PC-3 (cell line): ENCODE measurements at regions of chrX and their contacts with region 1.

Region 1: DNA sequence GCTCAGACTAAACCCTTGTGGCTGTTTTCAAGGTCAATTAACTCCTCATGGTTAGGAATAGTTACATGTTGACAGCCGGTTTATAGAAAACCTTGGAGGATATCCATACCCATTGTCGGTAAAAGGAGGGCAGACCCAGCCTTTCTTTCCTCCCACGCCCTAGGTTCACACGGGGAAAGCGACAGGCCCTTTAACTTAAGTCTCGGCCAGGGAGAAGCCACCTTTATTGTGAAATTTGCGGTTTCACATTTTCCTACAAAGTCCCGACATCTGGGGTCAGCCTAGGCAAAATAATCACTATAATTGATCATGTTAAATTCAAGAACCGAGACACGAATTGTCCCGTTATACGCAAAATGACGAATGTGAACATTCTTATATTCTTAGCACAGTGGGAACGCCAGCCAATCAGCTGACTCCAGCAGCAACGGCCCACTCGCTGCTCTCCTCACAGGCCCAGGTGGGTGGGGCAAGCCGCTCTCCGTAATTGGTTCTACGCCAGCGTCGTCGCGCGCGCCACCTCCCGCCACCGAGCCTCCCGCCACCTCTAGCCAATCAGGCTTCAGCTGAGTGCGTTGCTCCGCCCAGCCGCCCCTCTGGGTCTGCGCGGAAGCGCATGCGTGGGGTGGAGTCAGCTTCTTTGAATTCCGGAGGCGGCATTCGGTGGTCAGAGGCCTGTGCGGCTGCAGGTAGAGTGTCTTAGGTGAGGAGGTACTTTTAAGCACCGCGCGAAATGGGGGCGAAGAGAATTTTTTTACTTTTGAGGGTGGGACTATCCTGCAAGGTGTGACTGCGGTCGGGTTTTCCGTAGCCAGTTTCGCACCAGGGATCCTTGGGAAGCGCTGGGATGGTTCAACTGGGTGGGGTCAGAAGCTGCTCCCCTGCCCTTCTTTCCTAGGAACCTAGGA is at the start of gene CENPI:
- DNase-seq: peak; percentile 96
- ATAC-seq: peak; percentile 97
- H3K4me3 ChIP-seq: peak within 1 kb of the TSS; percentile 90
- H3K27ac ChIP-seq: no peak within 1 kb of the TSS; the same call in 1 of the 2 replicates
- H3K4me1 ChIP-seq: peaks cover 27% of the 10 kb centered on the region
- H3K27me3 ChIP-seq: no peaks in the 10 kb centered on the region
- CTCF ChIP-seq: no peak
- total RNA-seq, gene CENPI: 28.9 and 34.7 TPM in 2 replicates

Region 2: GRCh38 chrX:101051549-101052302 is 46.1 kb before region 1 on chrX and contains the start of gene TRMT2B:
- CTCF ChIA-PET with region 1: no interaction called
- POLR2A ChIA-PET with region 1: no interaction called
- intact Hi-C with region 1: loop called (anchors 2 kb)
- DNase-seq: peak; percentile 75
- ATAC-seq: peak; percentile 95
- H3K4me3 ChIP-seq: peak within 1 kb of the TSS; percentile 77
- H3K27ac ChIP-seq: peak within 1 kb of the TSS; percentile 75
- H3K4me1 ChIP-seq: peaks cover 6% of the 10 kb centered on the region; the same call in 1 of the 2 replicates
- H3K27me3 ChIP-seq: no peaks in the 10 kb centered on the region
- CTCF ChIP-seq: no peak
- total RNA-seq, gene TRMT2B: 22.7 and 23.4 TPM in 2 replicates

Region 3: DNA sequence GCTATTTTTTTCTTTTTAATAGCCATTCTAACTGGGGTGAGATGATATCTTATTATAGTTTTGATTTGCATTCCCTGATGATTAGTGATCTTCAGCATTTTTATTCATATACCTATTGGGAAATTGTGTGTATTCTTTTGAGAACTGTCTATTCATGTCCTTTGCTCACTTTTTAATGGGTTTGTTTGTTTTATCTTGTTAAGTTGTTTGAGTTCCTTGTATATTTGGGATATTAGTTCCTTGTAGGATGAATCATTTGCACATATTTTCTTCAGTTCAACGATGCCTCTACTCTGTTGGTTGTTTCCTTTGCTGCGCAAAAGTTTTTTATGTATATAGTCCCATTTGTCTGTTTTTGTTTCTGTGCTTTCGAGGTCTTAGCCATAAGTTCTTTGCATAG is 78.6 kb after region 1 on chrX:
- CTCF ChIA-PET with region 1: no interaction called
- POLR2A ChIA-PET with region 1: no interaction called
- intact Hi-C with region 1: no loop called
- DNase-seq: peak; percentile 9
- ATAC-seq: peak; percentile 75
- H3K4me3 ChIP-seq: no peak overlapping the region
- H3K27ac ChIP-seq: no peak overlapping the region
- H3K4me1 ChIP-seq: peaks cover 7% of the 10 kb centered on the region
- H3K27me3 ChIP-seq: no peaks in the 10 kb centered on the region
- CTCF ChIP-seq: no peak